ENCODE measurements at regions of chr6 and their contacts with region 1.

Region 1: GRCh38 chr6:149863697-149864577 is at the start of gene LRP11:
- DNase-seq: peak; percentile 77 to 92 (median 87)
- H3K4me3 ChIP-seq: peak within 1 kb of the TSS; percentile 53 to 88 (median 75)
- H3K27ac ChIP-seq: peak within 1 kb of the TSS; percentile 73 to 98 (median 94)
- H3K27me3 ChIP-seq: no peaks in the 10 kb centered on the region
- CTCF ChIP-seq: peak in 11 of 56 donors; percentile 1 to 21 (median 8)
- total RNA-seq, gene LRP11: 36.7 to 71.1 (median 58.3) TPM

Region 2: GRCh38 chr6:149012040-149012545 is 851.8 kb before region 1 on chr6:
- intact Hi-C with region 1: no loop called
- DNase-seq: no peak
- H3K4me3 ChIP-seq: no peak overlapping the region
- H3K27ac ChIP-seq: no peak overlapping the region
- H3K27me3 ChIP-seq: no peaks in the 10 kb centered on the region
- CTCF ChIP-seq: no peak

Region 3: DNA sequence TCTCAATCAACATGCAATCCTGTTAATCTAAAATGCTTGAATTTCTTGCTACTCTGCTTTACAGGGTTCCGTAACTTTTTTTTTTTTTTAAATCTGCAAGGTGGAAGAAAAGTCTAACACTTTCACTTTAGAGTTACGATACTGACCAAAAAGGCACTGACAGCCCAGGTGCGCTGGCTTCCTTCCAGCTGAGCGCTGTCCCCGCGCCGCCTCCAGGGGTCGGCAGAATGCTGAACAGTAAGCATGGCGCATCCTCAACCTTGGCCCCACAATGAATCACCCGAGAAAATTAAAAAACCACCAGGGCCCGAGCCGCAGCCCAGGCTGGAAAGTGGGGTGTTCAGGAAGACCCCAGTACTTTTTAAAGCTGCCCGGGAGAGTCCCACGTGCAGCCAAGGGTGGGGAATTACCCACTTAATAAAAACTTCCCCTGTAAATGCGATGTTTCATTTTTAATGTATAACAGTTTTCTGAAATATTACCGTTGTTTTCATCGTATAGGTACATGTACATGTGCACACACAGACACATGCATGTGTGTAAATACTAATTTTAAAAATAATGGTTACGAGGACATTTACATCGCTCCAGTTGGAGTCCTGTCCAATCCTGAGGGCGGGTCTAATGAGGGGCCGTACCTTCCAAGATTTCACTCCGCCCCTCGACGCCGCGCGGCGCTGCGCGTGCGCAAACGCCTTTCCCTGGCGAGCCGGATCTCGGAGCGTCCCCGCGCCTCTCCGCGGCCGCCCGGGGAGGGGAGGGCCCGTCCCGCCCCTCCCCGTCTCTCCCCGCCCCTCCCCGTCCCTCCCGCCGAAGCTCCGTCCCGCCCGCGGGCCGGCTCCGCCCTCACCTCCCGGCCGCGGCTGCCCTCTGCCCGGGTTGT is 298.2 kb before region 1 on chr6 and contains the start of gene GINM1:
- intact Hi-C with region 1: loop called in 1 of 2 experiments (anchors 5 kb)
- DNase-seq: peak; percentile 84 to 96 (median 90)
- H3K4me3 ChIP-seq: peak within 1 kb of the TSS; percentile 67 to 100 (median 96)
- H3K27ac ChIP-seq: peak within 1 kb of the TSS; percentile 39 to 97 (median 89)
- H3K27me3 ChIP-seq: no peaks in the 10 kb centered on the region
- CTCF ChIP-seq: peak in 55 of 56 donors; percentile 31 to 73 (median 60)
- total RNA-seq, gene GINM1: 24.7 to 50.8 (median 35.4) TPM

Region 4: DNA sequence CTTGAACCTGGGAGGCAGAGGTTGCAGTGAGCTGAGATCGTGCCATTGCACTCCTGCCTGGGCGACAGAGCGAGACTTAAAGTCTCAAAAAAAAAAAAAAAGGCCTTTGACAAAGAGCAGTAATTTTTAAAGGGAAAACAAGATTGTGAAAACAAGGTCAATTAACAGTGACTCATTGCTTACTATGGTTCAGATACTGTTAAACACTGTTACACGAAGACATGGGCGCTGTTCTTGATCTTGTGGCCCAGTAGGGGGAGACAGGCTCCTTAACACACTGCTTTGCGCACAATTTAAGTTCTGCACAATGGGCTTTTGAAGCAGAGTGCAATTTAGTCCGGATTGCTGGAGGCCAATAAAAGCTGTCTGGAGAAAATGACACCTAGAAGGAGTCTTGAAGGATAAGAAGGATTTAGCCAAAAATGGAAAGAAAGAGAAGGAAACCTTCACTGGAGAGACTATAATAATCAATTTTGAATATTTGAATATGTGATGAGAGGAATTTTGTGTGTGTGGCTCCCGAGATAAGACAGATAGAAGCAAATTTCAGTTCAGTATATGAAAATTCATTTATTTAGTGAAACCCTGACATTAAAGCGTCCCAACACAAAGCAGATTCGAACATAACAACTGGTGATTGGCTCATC is 140.0 kb before region 1 on chr6:
- intact Hi-C with region 1: loop called (anchors 5 to 10 kb)
- DNase-seq: peak in 7 of 10 donors; percentile 39 to 74 (median 51)
- H3K4me3 ChIP-seq: peak overlapping the region in 1 of 59 donors; percentile 2
- H3K27ac ChIP-seq: peak overlapping the region in 6 of 59 donors; percentile 2 to 51 (median 25)
- H3K27me3 ChIP-seq: no peaks in the 10 kb centered on the region
- CTCF ChIP-seq: peak; percentile 36 to 84 (median 70)

Region 5: GRCh38 chr6:149806127-149806526 is 57.8 kb before region 1 on chr6:
- intact Hi-C with region 1: no loop called
- DNase-seq: no peak
- H3K4me3 ChIP-seq: no peak overlapping the region
- H3K27ac ChIP-seq: no peak overlapping the region
- H3K27me3 ChIP-seq: no peaks in the 10 kb centered on the region
- CTCF ChIP-seq: no peak

Region 6: DNA sequence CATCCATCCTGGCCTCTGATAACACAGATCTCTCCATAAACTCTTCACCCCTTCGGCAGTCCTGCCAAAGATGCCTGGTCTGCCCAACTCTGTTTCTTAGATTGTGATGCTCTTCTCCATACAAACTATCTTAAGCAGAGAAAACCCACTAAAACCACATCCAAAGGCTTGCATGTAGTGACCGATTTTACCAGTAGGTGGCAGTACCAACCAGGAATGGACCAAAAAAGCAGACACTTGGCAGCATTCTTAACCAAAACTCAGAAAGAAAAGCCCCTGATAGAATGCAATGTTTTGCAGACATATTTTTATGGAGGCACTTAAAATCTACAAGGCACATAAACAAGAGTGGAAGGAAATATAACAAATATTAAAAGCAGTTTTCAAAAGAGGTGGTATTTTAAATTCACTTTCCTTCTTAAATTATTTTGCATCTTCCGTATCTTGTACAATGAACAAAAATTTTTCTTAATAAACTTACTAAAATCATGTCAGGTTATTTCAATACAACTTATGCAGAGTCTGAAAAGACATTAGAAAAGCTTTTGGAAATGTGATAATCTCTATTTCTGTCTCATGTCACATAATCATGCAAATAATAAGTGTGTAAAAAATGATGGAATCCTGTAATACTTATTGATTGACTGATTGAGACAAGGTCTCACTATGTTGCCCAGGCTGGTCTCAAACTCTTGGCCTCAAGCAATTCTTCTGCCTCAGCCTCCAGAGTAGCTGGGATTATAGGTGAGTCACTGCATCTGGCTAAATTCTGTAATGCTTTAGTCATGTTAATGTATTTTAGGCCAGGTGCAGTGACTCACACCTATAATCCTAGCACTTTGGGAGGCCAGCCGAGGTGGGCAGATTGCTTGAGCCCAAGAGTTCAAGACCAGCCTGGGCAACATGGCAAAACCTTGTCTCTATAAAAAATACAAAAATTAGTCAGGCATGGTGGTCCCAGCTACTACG is 29.1 kb before region 1 on chr6:
- intact Hi-C with region 1: loop called (anchors 1 kb)
- DNase-seq: peak in 5 of 10 donors; percentile 46 to 78 (median 48)
- H3K4me3 ChIP-seq: no peak overlapping the region
- H3K27ac ChIP-seq: peak overlapping the region in 13 of 59 donors; percentile 1 to 46 (median 26)
- H3K27me3 ChIP-seq: no peaks in the 10 kb centered on the region
- CTCF ChIP-seq: peak; percentile 86 to 100 (median 96)

Region 7: DNA sequence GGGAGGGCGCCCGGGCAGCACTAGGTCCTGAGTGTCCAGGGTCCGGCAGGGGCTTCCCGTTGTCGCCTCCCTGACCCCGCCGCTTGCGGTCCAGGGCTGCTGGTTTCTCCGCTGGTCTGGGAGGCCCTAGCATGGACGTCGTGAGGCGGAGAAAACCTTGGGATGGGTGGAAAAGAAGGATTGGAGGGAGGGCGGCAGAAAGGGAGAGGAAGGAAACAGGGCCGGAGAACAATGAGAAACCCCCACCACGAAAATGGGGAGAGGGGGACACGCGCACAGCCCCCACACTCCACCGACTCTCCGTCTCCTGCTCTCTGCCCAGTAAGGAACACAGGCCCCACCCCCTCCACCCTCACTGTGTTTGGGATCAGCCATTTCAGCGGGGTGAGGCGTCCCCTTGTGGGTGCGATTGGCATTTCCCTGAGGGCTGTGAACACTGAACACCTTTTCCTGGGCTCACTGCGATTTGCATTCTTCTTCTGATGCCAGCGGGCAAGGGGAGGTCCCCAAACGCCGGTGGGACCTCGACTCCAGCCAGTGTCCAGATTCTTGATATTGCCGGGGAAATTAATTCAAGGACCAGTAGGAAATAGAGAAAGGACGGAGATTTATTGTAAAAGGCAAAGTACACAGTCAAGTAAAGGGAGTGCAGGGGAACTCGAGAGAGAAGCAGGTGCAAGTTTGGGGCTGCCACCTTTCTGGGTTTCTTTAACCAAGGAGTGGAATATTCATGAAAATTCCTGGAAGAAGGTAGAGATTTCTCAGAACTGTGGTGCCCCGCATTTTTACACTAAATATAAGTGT is 62.2 kb after region 1 on chr6:
- intact Hi-C with region 1: loop called in 1 of 2 experiments (anchors 5 kb)
- DNase-seq: peak; percentile 60 to 89 (median 82)
- H3K4me3 ChIP-seq: peak overlapping the region; percentile 25 to 69 (median 54)
- H3K27ac ChIP-seq: peak overlapping the region in 16 of 59 donors; percentile 6 to 73 (median 40)
- H3K27me3 ChIP-seq: peaks cover 0 to 99% (median 22%) of the 10 kb centered on the region in 45 donors
- CTCF ChIP-seq: peak; percentile 47 to 89 (median 70)

Region 8: DNA sequence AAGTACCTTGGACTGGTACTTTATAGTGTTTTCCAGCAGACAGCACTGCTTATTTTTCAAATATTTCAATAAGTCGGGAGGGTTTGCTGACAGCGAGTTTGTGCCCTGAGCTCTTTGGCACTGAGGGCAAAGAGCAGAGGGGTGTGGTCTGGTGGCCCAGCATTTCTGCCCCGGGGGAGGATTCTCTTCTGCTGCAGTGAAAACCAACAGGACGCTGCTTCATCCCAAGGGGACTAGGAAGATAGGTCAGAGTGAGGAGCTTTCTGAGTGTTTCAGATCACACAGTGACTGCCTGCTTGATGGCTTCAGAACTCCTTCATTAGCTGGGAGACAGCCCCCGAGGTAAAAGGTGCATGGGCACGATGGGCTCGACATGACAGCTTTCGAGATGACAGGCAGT is 86.5 kb after region 1 on chr6:
- intact Hi-C with region 1: no loop called
- DNase-seq: no peak
- H3K4me3 ChIP-seq: no peak overlapping the region
- H3K27ac ChIP-seq: no peak overlapping the region
- H3K27me3 ChIP-seq: peaks cover 8 to 70% (median 43%) of the 10 kb centered on the region in 45 donors
- CTCF ChIP-seq: no peak

Measured in dorsolateral prefrontal cortex (tissue), 120 donors.